ENCODE measurements at regions of chr6 and their contacts with region 1.

Region 1: GRCh38 chr6:17584241-17584803 is 15.8 kb upstream of the FAM8A1 start:
- DNase-seq: peak; percentile 84
- H3K4me3 ChIP-seq: peak overlapping the region in 1 of 3 experiments; percentile 13
- H3K27ac ChIP-seq: peak overlapping the region; percentile 63
- H3K4me1 ChIP-seq: peaks cover 8% of the 10 kb centered on the region
- H3K27me3 ChIP-seq: no peaks in the 10 kb centered on the region
- CTCF ChIP-seq: peak; percentile 38 to 61
- POLR2A ChIP-seq: no peak

Region 2: GRCh38 chr6:17167327-17167979 is 416.9 kb before region 1 on chr6:
- CTCF ChIA-PET with region 1: interaction called, 17 read pairs
- POLR2A ChIA-PET with region 1: no interaction called
- dilution Hi-C with region 1: no loop called
- intact Hi-C with region 1: no loop called
- DNase-seq: peak; percentile 46
- H3K4me3 ChIP-seq: no peak overlapping the region
- H3K27ac ChIP-seq: no peak overlapping the region
- H3K4me1 ChIP-seq: no peaks in the 10 kb centered on the region
- H3K27me3 ChIP-seq: no peaks in the 10 kb centered on the region
- CTCF ChIP-seq: peak; percentile 52 to 65
- POLR2A ChIP-seq: no peak

Region 3: DNA sequence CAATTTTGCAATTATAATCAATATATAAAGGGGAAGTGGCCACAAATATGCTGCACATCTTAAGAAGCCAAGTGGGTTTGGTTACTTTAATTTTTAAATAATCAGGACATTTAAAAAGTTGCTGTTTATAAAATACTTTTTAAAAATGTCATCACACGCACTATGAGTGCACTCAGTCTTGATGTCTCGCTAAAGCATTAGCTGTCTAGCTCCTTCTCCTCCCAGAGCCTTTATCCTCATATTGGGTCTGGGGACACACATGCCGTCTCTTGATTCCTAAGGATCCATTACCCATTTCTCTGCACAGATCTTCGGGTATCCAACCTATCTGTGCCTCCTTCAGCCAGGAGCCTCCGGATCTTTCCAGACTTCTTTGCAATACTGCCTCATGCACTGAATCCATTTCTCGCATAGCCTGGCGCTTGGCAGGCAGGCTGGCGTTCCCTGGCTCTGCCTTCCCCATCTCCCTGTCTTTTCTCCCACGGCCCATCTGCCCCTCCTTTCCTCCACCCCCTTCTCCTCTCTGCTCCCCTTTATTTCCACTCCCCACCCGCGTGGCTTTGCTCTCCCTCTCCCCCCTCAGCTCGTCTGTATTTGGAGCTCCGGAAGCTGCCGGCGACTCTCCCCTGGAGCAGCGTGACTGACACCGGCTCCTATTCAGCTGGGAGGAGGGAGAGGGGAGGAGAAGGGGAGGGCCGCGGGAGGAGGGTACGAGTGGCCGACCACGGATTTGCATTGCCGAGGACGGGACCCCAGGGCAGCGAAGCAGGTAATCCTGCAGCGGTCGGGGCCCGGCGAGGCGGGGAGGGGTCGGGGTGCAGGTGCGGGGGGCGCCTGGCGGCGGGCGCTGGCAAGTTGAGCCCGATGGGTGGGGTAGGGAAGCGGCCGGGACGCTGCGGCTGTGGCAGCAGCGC is 191.1 kb before region 1 on chr6 and contains the start of gene CAP2:
- CTCF ChIA-PET with region 1: interaction called, 13 read pairs
- POLR2A ChIA-PET with region 1: no interaction called
- dilution Hi-C with region 1: no loop called
- intact Hi-C with region 1: loop called (anchors 1 kb)
- DNase-seq: peak; percentile 48
- H3K4me3 ChIP-seq: peak within 1 kb of the TSS; percentile 66 to 94 (median 73)
- H3K27ac ChIP-seq: peak within 1 kb of the TSS; percentile 42
- H3K4me1 ChIP-seq: peaks cover 11% of the 10 kb centered on the region
- H3K27me3 ChIP-seq: no peaks in the 10 kb centered on the region
- CTCF ChIP-seq: no peak
- POLR2A ChIP-seq: no peak
- total RNA-seq, gene CAP2: 18.0 and 21.3 TPM in 2 replicates

Region 4: GRCh38 chr6:17493286-17493685 is 91.0 kb before region 1 on chr6:
- CTCF ChIA-PET with region 1: interaction called, 9 read pairs
- POLR2A ChIA-PET with region 1: interaction called, 4 read pairs
- dilution Hi-C with region 1: no loop called
- intact Hi-C with region 1: loop called (anchors 1 kb)
- DNase-seq: peak; percentile 89
- H3K4me3 ChIP-seq: no peak overlapping the region
- H3K27ac ChIP-seq: peak overlapping the region; percentile 94
- H3K4me1 ChIP-seq: peaks cover 76% of the 10 kb centered on the region
- H3K27me3 ChIP-seq: no peaks in the 10 kb centered on the region
- CTCF ChIP-seq: no peak
- POLR2A ChIP-seq: no peak

Region 5: GRCh38 chr6:17551383-17551958 is 32.9 kb before region 1 on chr6:
- CTCF ChIA-PET with region 1: no interaction called
- POLR2A ChIA-PET with region 1: no interaction called
- dilution Hi-C with region 1: no loop called
- intact Hi-C with region 1: no loop called
- DNase-seq: no peak
- H3K4me3 ChIP-seq: no peak overlapping the region
- H3K27ac ChIP-seq: no peak overlapping the region
- H3K4me1 ChIP-seq: no peaks in the 10 kb centered on the region
- H3K27me3 ChIP-seq: no peaks in the 10 kb centered on the region
- CTCF ChIP-seq: no peak
- POLR2A ChIP-seq: no peak

Region 6: GRCh38 chr6:17599885-17600526 is 15.7 kb after region 1 on chr6 and contains the start of gene FAM8A1:
- CTCF ChIA-PET with region 1: interaction called, 17 read pairs
- POLR2A ChIA-PET with region 1: no interaction called
- dilution Hi-C with region 1: no loop called
- intact Hi-C with region 1: no loop called
- DNase-seq: peak; percentile 84
- H3K4me3 ChIP-seq: peak within 1 kb of the TSS; percentile 42 to 94 (median 91)
- H3K27ac ChIP-seq: peak within 1 kb of the TSS; percentile 84
- H3K4me1 ChIP-seq: peaks cover 5% of the 10 kb centered on the region
- H3K27me3 ChIP-seq: no peaks in the 10 kb centered on the region
- CTCF ChIP-seq: peak in 1 of 2 donors; percentile 69
- POLR2A ChIP-seq: peak; percentile 62
- total RNA-seq, gene FAM8A1: 11.3 and 11.5 TPM in 2 replicates

Region 7: GRCh38 chr6:17808609-17809008 is 224.3 kb after region 1 on chr6:
- CTCF ChIA-PET with region 1: interaction called, 29 read pairs
- POLR2A ChIA-PET with region 1: no interaction called
- dilution Hi-C with region 1: no loop called
- intact Hi-C with region 1: loop called (anchors 1 kb)
- DNase-seq: no peak
- H3K4me3 ChIP-seq: no peak overlapping the region
- H3K27ac ChIP-seq: no peak overlapping the region
- H3K4me1 ChIP-seq: peaks cover 8% of the 10 kb centered on the region
- H3K27me3 ChIP-seq: no peaks in the 10 kb centered on the region
- CTCF ChIP-seq: no peak
- POLR2A ChIP-seq: no peak

Region 8: GRCh38 chr6:18122124-18123093 is 538.1 kb after region 1 on chr6 and contains the start of gene NHLRC1:
- CTCF ChIA-PET with region 1: no interaction called
- POLR2A ChIA-PET with region 1: no interaction called
- dilution Hi-C with region 1: no loop called
- intact Hi-C with region 1: loop called (anchors 1 kb)
- DNase-seq: peak; percentile 92
- H3K4me3 ChIP-seq: peak within 1 kb of the TSS in 1 of 3 experiments; percentile 35
- H3K27ac ChIP-seq: no peak within 1 kb of the TSS
- H3K4me1 ChIP-seq: peaks cover 5% of the 10 kb centered on the region
- H3K27me3 ChIP-seq: no peaks in the 10 kb centered on the region
- CTCF ChIP-seq: peak; percentile 94 to 97
- POLR2A ChIP-seq: peak; percentile 65
- total RNA-seq, gene NHLRC1: 2.2 and 2.3 TPM in 2 replicates